Lower leg skin (tissue), 4 donors: ENCODE measurements at regions of chr6 and their contacts with region 1.

Region 1: GRCh38 chr6:29834564-29835436 is 7.2 kb downstream of the HLA-G start:
- DNase-seq: peak in 1 of 2 donors; percentile 84
- H3K4me3 ChIP-seq: no peak overlapping the region
- CTCF ChIP-seq: peak in 1 of 3 donors; percentile 22
- POLR2A ChIP-seq: no peak

Region 2: DNA sequence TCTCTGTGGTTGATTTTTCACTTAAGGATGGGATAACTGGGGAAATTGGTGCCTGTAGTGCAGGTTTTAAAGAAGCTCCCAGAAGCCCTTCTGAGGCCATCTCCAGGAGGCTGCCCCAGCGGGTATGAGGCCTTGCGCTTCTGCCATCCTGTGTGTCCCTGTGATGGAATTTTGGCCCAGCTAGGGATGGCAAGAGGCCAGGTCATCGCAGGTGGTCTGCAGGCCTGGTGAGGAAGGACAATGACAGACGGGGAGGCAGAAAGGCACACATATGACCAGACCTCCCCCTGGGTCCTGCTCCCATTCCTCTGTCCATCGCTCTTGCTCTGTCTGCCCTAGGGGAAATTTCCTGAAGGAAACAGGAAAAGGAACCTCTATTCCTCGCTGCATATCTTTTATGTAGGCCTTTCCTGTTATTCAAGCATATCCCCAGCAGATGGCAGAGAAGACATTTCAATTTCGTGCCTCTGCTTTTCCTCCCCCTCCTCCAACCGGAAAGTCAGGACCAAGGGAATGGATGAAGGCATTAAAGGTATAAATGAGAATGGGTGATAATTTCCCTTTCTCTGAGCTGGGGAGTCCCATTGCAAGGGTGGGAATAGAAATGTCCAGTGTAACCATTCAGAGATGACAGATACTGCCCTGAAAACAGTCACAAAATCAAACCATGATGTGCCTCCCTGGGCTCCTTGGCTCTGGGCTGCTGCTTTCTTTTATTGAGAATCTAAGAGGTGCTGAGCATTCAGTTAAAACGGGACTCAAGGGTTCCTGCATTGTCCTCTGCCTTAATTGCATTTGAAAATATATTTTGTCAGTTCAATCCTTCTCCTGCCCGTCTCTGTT is 129.2 kb before region 1 on chr6:
- intact Hi-C with region 1: loop called (anchors 10 kb)
- DNase-seq: no peak
- H3K4me3 ChIP-seq: no peak overlapping the region
- CTCF ChIP-seq: peak in 1 of 3 donors; percentile 17
- POLR2A ChIP-seq: no peak